GM10248 (cell line): ENCODE measurements at regions of chr7 and their contacts with region 1.

Region 1: GRCh38 chr7:70710011-70710480 is 421.9 kb upstream of the GALNT17 start:
- DNase-seq: no peak
- CTCF ChIP-seq: no peak

Region 2: DNA sequence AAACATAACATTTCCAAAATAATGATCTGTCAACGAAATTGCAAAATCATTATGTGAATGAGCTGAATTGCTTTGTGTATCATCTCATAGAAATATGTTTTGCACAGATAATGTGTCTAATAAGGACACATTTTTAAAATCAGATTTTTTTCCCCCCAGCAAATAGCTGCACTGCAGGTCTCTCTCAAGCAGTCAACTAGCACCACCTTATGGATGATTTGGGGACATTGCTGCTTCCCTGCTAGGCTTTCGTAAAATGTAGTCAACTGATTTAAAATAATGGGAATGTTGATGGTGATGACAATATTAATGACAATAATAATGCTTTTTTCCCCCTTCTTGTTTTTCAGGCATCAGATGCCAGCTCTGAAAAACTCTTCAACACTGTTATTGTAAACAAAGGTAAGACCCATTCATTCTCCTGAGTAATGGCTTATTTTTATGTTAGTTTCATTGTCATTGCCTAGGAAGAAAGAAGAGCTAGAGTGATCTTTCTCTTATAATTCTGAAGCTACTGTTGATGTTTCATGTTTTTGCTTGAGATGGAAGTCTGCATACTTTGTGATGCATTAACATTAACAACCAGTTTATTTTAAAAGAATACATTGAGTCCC is 11.7 kb before region 1 on chr7:
- CTCF ChIA-PET with region 1: interaction called, 91 read pairs
- POLR2A ChIA-PET with region 1: no interaction called
- DNase-seq: peak; percentile 45
- CTCF ChIP-seq: peak; percentile 84